Calu3 (cell line): ENCODE measurements at regions of chr7 and their contacts with region 1.

Region 1: DNA sequence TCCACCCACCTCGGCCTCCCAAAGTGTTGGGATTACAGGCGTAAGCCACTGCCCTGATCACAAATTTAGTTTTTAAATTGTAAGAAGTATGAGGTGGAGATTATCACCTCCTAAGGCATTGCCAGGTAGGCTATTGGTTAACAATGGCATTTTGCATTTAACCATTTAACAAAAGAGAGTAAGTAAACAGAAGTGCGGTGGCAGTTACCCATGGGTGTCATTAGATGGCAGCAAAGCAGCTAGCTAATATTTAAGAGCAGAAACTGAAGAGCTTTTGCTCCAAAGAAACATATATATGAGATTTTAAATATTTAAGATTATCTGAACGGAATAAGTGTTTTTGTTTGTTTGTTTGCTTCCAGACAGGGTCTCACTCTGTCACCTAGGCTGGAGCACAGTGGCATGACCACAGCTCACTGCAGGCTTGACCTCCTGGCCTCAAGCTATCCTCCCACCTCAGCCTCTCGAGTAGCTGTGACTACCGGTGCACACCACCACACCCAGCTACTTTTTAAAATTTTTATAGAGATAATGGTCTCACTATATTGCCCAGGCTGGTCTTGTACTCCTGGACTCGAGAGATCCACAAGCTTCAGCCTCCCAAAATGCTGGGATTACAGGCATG is 325.5 kb upstream of the C7orf33 start:
- DNase-seq: peak; percentile 17
- H3K4me3 Mint-ChIP-seq: no peak overlapping the region
- H3K27ac Mint-ChIP-seq: no peak overlapping the region
- H3K4me1 Mint-ChIP-seq: peaks cover 10% of the 10 kb centered on the region
- H3K27me3 Mint-ChIP-seq: peaks cover 71% of the 10 kb centered on the region
- CTCF ChIP-seq: peak; percentile 52

Region 2: DNA sequence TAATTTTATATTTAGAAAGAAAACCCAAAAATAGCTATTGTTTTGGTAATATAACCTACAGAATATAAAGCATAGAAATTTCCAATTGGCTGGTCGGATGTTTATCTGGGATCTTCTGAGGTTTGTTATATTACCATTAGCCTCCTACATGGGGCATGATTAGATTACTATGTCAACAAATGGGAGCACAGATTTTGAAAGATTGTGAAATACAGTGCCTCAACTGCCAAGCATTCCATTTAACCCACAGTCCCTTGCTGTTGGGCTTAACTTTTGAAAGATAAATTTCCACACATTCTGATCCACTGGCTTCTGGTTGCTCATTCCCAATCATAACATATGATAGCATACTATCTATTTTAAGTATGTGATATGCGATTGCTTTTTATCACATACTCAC is 129.9 kb before region 1 on chr7:
- CTCF ChIA-PET with region 1: no interaction called
- intact Hi-C with region 1: no loop called
- DNase-seq: no peak
- H3K4me3 Mint-ChIP-seq: no peak overlapping the region
- H3K27ac Mint-ChIP-seq: no peak overlapping the region
- H3K4me1 Mint-ChIP-seq: no peaks in the 10 kb centered on the region
- H3K27me3 Mint-ChIP-seq: no peaks in the 10 kb centered on the region
- CTCF ChIP-seq: no peak

Region 3: DNA sequence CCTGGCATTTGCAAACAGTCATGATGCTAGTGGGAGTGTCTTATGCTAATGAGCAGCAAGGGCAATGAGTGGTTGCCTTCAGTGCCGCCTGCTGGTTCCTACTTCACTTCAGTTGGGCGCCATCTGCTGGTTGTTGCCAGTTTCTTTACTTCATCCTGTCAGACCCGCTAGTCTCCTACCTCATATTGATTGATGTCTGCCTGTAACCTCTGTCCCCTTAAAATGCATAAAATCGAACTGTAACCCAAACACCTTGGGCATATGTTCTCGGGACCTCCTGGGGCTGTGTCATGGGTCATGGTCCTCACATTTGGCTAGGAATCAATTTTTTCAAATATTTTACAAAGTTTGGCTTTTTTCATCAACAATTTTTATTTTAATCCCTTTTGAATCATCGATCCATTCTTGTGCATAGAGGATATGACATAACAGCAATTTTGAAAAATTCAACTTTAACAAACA is 262.7 kb after region 1 on chr7:
- CTCF ChIA-PET with region 1: no interaction called
- intact Hi-C with region 1: loop called (anchors 5 kb)
- DNase-seq: peak; percentile 80
- H3K4me3 Mint-ChIP-seq: no peak overlapping the region
- H3K27ac Mint-ChIP-seq: no peak overlapping the region
- H3K4me1 Mint-ChIP-seq: peaks cover 5% of the 10 kb centered on the region
- H3K27me3 Mint-ChIP-seq: peaks cover 58% of the 10 kb centered on the region
- CTCF ChIP-seq: peak; percentile 54

Region 4: DNA sequence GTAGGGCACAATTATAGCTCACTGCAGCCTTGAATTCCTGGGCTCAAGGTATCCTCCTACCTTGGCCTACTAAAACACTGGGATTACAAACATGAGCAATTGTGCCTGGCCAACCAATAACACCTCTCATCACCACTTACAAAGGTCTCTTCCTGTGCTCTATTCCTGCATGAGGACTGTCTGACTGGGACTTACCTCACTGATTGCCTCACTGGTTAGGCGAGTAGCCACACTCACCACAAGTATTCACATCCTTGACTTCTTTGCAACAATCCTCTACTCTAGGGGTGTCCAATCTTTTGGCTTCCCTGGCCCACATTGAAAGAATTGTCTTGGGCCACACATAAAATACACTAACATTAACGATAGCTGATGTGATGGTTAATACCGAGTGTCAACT is 785.9 kb after region 1 on chr7:
- CTCF ChIA-PET with region 1: no interaction called
- intact Hi-C with region 1: no loop called
- DNase-seq: no peak
- H3K4me3 Mint-ChIP-seq: no peak overlapping the region
- H3K27ac Mint-ChIP-seq: no peak overlapping the region
- H3K4me1 Mint-ChIP-seq: no peaks in the 10 kb centered on the region
- H3K27me3 Mint-ChIP-seq: no peaks in the 10 kb centered on the region
- CTCF ChIP-seq: no peak